ENCODE measurements at regions of chr17 and their contacts with region 1.

Region 1: GRCh38 chr17:28644985-28645939 is at the start of gene BLTP2:
- DNase-seq: peak; percentile 90 to 97 (median 94)
- ATAC-seq: peak; percentile 94 to 97
- H3K4me3 Mint-ChIP-seq: peak within 1 kb of the TSS; percentile 90 to 98 (median 92)
- H3K27ac Mint-ChIP-seq: peak within 1 kb of the TSS; percentile 94 to 99 (median 97)
- H3K4me1 Mint-ChIP-seq: peaks cover 18 to 50% (median 41%) of the 10 kb centered on the region in 4 donors
- H3K27me3 Mint-ChIP-seq: no peaks in the 10 kb centered on the region
- polyA plus RNA-seq, gene BLTP2: 36.0 to 51.7 (median 36.1) TPM

Region 2: GRCh38 chr17:28571255-28572122 is 73.8 kb before region 1 on chr17 and contains the start of gene PIGS:
- POLR2A ChIA-PET with region 1: interaction called, 22 read pairs
- DNase-seq: peak; percentile 80 to 94 (median 85)
- ATAC-seq: peak; percentile 96 to 97
- H3K4me3 Mint-ChIP-seq: peak within 1 kb of the TSS; percentile 91 to 98 (median 95)
- H3K27ac Mint-ChIP-seq: peak within 1 kb of the TSS; percentile 88 to 98 (median 96)
- H3K4me1 Mint-ChIP-seq: peaks cover 41 to 72% (median 64%) of the 10 kb centered on the region in 4 donors
- H3K27me3 Mint-ChIP-seq: no peaks in the 10 kb centered on the region
- polyA plus RNA-seq, gene PIGS: 36.7 to 48.1 (median 42.0) TPM

Region 3: DNA sequence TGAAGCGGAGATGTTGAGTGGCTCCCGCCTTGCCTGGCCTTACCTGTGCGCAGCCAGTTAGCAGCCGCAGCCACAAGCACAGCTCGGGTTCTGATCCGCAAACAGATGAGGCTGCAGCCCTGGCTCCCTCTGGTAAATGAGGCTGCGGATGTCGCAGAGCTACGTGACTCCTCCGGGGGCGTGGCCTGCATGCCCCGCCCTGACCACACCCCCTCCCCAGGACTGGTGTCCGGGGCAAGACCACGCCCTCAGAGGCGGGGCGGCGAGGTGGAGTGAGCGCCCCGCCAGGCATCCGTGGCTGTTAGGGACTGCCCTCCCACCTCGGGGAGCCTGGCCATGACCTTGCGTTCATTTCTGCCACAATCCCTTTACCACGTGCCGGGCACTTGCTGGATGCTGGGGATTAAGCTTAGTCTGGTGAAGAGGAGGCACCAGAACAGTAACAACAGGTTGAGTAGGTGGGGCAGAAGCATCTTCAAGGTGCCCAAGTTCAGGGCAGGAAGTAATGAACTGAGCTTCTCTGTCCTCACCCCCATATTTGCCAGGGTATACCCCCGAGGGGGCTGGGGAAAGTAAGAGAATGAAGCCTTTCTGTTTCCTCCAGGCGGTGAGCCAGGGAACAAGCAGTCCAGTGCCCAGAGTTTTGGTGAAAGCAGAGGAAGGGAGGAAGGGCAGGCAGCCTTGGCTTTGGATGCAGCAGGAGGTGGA is 68.3 kb before region 1 on chr17 and contains the start of gene ALDOC:
- POLR2A ChIA-PET with region 1: interaction called, 22 read pairs
- DNase-seq: peak; percentile 90 to 100 (median 97)
- ATAC-seq: peak; percentile 94 to 97
- H3K4me3 Mint-ChIP-seq: peak within 1 kb of the TSS; percentile 77 to 91 (median 87)
- H3K27ac Mint-ChIP-seq: peak within 1 kb of the TSS; percentile 82 to 96 (median 94)
- H3K4me1 Mint-ChIP-seq: peaks cover 24 to 43% (median 31%) of the 10 kb centered on the region in 4 donors
- H3K27me3 Mint-ChIP-seq: no peaks in the 10 kb centered on the region
- polyA plus RNA-seq, gene ALDOC: 65.3 to 86.7 (median 78.9) TPM

Region 4: DNA sequence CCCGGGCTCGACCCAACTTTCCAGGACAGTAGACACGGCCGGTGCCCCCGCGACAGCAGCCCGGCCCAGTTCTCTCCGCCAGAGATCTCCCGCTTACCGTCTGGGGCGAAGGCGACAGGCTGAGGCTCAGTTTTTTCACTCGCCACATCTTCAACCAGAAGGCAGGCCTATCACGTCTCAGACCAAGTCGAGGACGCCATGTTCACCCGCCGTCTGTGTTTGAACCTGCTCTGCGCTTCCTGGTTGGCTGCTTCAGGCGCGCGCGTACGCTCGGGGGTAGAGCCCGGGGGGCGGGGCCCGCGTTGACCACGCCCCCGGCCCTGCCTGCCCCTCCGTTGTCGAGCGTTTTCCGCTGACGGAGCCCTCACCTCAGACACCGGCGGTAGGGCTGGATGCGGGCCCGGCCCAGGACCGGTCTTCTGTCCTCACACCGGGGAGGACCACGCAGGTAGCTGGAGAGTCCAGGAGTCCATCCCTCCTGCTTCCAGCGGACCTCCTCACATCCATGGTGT is 46.4 kb before region 1 on chr17 and contains the start of gene SPAG5:
- POLR2A ChIA-PET with region 1: interaction called, 14 read pairs
- DNase-seq: peak; percentile 90 to 97 (median 94)
- ATAC-seq: peak; percentile 93 to 94
- H3K4me3 Mint-ChIP-seq: peak within 1 kb of the TSS; percentile 89 to 99 (median 95)
- H3K27ac Mint-ChIP-seq: peak within 1 kb of the TSS; percentile 94 to 100 (median 96)
- H3K4me1 Mint-ChIP-seq: peaks cover 14 to 27% (median 23%) of the 10 kb centered on the region in 4 donors
- H3K27me3 Mint-ChIP-seq: no peaks in the 10 kb centered on the region
- polyA plus RNA-seq, gene SPAG5: 0.40 to 2.7 (median 0.81) TPM

Region 5: DNA sequence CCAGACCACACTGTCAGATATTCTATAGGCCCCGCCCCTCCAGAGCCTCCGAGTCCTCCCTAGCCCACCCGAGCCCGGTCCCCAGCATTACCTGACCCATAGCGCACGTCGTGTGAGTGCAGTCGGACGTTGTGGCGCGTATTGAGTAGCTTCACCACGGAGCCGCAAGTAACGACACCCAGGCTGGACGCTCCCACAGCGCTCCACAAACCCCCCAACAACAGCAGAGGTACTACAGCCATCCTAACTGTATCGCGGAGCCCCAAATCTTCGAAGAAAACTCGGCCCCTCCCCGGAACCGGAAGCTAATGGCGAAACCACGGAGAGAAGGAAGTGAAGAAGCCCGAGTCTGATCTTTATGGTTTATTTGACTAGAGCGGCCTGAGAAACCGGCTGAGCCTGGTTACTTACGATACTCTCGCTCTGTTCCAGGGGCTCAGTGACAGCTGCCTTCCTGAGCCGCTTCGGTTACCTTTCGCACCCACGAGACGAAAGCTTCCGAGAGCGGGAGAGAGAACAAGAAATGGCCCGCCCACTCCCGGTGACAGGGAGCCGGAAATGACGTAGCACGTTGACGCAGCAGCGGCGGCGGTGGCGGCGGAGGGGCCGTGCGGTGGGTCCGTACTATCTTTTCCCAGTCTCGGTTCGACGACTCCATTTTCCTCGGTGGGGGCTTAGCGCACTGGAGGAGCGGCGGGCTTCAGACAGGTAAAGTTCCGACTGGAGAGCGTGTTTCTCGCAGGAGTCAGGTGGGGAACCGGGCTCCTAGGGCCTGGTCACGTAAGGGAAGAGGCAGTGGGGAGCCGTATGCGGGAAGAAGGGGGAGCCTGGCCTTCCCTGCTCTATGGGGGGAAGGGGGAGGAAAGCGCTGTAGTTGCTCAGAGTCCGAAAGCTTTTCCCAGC is 16.6 kb after region 1 on chr17 and contains the starts of genes SDF2 and SUPT6H:
- POLR2A ChIA-PET with region 1: interaction called, 62 read pairs
- DNase-seq: peak; percentile 86 to 98 (median 94)
- ATAC-seq: peak; percentile 88 to 89
- H3K4me3 Mint-ChIP-seq: peak within 1 kb of the TSS; percentile 94 to 100 (median 100)
- H3K27ac Mint-ChIP-seq: peak within 1 kb of the TSS; percentile 99 to 100 (median 100)
- H3K4me1 Mint-ChIP-seq: peaks cover 30 to 70% (median 65%) of the 10 kb centered on the region in 4 donors
- H3K27me3 Mint-ChIP-seq: no peaks in the 10 kb centered on the region
- polyA plus RNA-seq, gene SDF2: 55.8 to 76.3 (median 59.0) TPM
- polyA plus RNA-seq, gene SUPT6H: 7.4 to 22.0 (median 10.0) TPM

Region 6: DNA sequence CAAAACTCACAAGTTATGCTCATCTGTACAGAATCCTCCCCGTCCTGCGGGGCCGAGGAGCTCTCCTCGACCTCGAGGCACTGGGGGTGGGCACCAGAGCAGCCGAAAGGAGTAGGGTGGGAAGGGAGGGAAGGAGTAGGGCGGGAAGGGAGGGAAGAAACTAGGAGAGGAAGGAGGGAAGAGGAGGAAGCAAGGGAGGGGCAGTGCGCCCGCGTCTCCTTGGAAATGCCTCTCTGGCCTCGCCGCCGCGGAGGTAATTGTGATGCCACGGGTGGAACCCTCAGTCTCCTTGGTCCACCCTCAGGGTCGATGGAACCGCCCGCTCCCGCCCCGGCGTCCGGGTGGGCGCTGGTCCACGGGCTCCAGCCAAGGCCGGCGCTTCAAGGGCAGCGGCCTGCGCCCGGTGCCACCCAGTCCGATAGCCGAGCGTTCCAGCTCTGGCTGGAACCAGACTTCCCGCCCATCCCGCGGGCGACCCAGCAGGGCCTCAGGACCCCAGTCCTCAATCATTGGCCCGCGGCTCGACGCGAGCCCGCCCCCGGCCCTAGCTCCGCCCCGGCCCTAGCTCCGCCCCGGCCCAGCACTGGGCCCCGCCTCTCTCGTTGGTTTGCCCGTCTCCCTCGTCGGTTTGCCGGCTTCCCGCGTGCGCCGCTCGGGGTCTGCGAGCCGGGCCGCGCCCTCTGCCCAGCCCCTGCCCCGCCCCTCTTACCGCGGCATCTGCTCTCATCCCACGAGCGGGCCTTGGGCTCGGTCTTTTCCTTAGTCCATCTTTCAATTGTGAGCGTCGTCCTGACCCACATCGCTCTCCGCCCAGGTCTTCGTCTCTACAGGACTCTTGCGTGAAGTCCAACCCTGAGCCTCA is 65.8 kb after region 1 on chr17:
- POLR2A ChIA-PET with region 1: interaction called, 20 read pairs
- DNase-seq: peak; percentile 82 to 92 (median 88)
- ATAC-seq: peak; percentile 88 to 89
- H3K4me3 Mint-ChIP-seq: peak overlapping the region; percentile 84 to 95 (median 92)
- H3K27ac Mint-ChIP-seq: peak overlapping the region; percentile 85 to 97 (median 95)
- H3K4me1 Mint-ChIP-seq: peaks cover 3 to 20% (median 15%) of the 10 kb centered on the region in 4 donors
- H3K27me3 Mint-ChIP-seq: peaks cover 0 to 18% (median 10%) of the 10 kb centered on the region in 5 donors

Region 7: DNA sequence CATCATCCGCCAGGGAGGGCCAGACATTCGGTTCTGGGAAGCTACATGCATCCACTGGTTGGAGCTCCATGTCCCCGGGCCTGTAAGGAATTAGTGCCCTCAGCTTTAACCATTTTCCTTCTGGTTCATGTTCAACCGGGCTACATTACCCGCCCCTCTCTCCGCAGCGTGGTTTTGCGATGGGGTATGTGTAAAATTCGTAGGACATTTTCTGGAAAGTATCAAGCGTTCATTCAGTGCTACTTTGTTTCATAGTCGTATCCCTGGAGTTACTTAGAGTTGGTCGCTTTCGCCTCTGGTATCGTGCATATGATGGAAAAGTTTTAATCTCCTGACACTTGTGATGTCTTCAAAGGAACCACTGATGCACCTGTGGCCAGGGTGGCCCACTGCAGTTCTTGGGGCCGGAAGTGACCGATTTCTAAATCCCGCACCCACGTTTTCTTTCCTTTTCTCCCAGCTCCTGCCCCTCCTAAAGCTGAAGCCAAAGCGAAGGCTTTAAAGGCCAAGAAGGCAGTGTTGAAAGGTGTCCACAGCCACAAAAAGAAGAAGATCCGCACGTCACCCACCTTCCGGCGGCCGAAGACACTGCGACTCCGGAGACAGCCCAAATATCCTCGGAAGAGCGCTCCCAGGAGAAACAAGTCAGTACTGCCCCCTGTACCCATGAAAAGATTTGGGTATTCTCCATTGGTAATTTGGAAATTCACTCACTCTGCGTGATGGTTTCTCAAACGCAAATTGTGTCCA is 75.2 kb after region 1 on chr17:
- POLR2A ChIA-PET with region 1: interaction called, 32 read pairs
- DNase-seq: peak in 1 of 10 donors; percentile 39
- ATAC-seq: peak in 1 of 2 donors; percentile 0
- H3K4me3 Mint-ChIP-seq: peak overlapping the region; percentile 93 to 99 (median 98)
- H3K27ac Mint-ChIP-seq: peak overlapping the region; percentile 96 to 100 (median 98)
- H3K4me1 Mint-ChIP-seq: peaks cover 20 to 75% (median 56%) of the 10 kb centered on the region in 4 donors
- H3K27me3 Mint-ChIP-seq: peaks cover 0 to 20% (median 7%) of the 10 kb centered on the region in 5 donors

Measured in naive thymus-derived CD8-positive, alpha-beta T cell (primary cell).